Heart left ventricle (tissue), 16 donors: ENCODE measurements at regions of chr1 and their contacts with region 1.

Region 1: GRCh38 chr1:234610348-234611152 is 572 bp upstream of the IRF2BP2 start:
- DNase-seq: peak; percentile 97 to 98 (median 97)
- ATAC-seq: peak; percentile 42 to 85 (median 72)
- H3K4me3 ChIP-seq: peak overlapping the region; percentile 32 to 93 (median 62)
- H3K27ac ChIP-seq: peak overlapping the region; percentile 94 to 100 (median 99)
- H3K4me1 ChIP-seq: peaks cover 9 to 43% (median 32%) of the 10 kb centered on the region in 12 donors
- H3K27me3 ChIP-seq: no peaks in the 10 kb centered on the region
- CTCF ChIP-seq: peak in 1 of 12 donors; percentile 7
- POLR2A ChIP-seq: peak; percentile 61 to 99

Region 2: DNA sequence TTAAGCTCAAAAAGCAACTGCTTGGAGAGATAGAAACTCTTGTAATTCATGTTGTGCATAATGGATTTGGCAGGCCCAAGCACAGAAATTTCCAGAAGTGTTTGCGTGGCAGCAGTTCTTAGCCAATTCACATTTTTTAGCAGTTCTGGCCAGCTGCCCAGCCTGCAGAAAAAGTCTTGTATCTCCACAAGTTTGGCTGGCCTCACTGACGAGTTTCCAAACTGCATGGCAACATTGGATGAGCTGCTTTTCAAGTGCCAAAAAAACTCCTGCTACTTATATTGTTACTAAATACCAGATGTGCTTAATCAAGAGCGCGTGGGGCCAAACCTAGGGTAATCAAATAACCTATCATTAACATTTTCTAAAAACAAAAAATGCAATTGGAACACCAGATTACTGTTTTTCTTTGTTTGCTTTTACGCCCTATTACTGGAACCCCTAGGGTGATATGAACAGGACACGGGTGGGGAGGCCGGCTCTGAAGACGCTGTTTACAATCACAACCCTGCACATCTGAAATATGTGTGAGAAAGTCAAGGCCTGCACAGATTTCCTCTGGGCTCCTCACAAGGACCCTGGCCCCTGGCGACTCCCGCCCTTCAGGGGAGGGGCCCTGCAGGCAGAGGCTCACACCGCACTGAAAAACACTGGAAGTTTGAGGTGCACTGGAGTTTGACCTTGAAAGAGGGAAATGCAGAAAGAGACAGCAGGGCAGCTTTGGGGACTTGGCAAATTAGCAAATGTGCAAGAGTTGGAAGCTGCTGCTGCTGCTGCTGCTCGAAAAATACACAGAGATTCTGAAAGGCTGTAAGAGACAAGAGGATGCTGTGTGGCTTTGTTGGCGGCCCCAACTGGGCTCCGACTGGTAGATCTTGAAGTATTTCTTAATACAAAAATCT is 76.3 kb before region 1 on chr1:
- intact Hi-C with region 1: loop called in 2 of 10 experiments (anchors 1 to 5 kb)
- DNase-seq: peak; percentile 93 to 97 (median 94)
- ATAC-seq: peak; percentile 7 to 19 (median 16)
- H3K4me3 ChIP-seq: peak overlapping the region in 1 of 12 donors; percentile 13
- H3K27ac ChIP-seq: peak overlapping the region; percentile 91 to 99 (median 98)
- H3K4me1 ChIP-seq: peaks cover 35 to 100% (median 98%) of the 10 kb centered on the region in 12 donors
- H3K27me3 ChIP-seq: no peaks in the 10 kb centered on the region
- CTCF ChIP-seq: no peak
- POLR2A ChIP-seq: no peak

Region 3: GRCh38 chr1:234647245-234647644 is 36.7 kb after region 1 on chr1:
- intact Hi-C with region 1: no loop called
- DNase-seq: no peak
- ATAC-seq: no peak
- H3K4me3 ChIP-seq: no peak overlapping the region
- H3K27ac ChIP-seq: no peak overlapping the region
- H3K4me1 ChIP-seq: peaks cover 0 to 16% (median 0%) of the 10 kb centered on the region in 12 donors
- H3K27me3 ChIP-seq: no peaks in the 10 kb centered on the region
- CTCF ChIP-seq: no peak
- POLR2A ChIP-seq: no peak

Region 4: GRCh38 chr1:234709473-234710228 is 99.1 kb after region 1 on chr1:
- intact Hi-C with region 1: no loop called
- DNase-seq: peak in 3 of 5 donors; percentile 74 to 78 (median 78)
- ATAC-seq: peak; percentile 82 to 89 (median 84)
- H3K4me3 ChIP-seq: no peak overlapping the region
- H3K27ac ChIP-seq: peak overlapping the region in 10 of 12 donors; percentile 26 to 83 (median 64)
- H3K4me1 ChIP-seq: peaks cover 0 to 37% (median 2%) of the 10 kb centered on the region in 12 donors
- H3K27me3 ChIP-seq: no peaks in the 10 kb centered on the region
- CTCF ChIP-seq: no peak
- POLR2A ChIP-seq: no peak

Region 5: GRCh38 chr1:234722904-234723720 is 112.6 kb after region 1 on chr1:
- intact Hi-C with region 1: loop called (anchors 1 to 5 kb)
- DNase-seq: peak in 4 of 5 donors; percentile 66 to 79 (median 72)
- ATAC-seq: peak; percentile 6 to 39 (median 16)
- H3K4me3 ChIP-seq: peak overlapping the region in 7 of 12 donors; percentile 5 to 37 (median 26)
- H3K27ac ChIP-seq: peak overlapping the region; percentile 93 to 99 (median 99)
- H3K4me1 ChIP-seq: peaks cover 41 to 98% (median 92%) of the 10 kb centered on the region in 12 donors
- H3K27me3 ChIP-seq: no peaks in the 10 kb centered on the region
- CTCF ChIP-seq: no peak
- POLR2A ChIP-seq: no peak

Region 6: DNA sequence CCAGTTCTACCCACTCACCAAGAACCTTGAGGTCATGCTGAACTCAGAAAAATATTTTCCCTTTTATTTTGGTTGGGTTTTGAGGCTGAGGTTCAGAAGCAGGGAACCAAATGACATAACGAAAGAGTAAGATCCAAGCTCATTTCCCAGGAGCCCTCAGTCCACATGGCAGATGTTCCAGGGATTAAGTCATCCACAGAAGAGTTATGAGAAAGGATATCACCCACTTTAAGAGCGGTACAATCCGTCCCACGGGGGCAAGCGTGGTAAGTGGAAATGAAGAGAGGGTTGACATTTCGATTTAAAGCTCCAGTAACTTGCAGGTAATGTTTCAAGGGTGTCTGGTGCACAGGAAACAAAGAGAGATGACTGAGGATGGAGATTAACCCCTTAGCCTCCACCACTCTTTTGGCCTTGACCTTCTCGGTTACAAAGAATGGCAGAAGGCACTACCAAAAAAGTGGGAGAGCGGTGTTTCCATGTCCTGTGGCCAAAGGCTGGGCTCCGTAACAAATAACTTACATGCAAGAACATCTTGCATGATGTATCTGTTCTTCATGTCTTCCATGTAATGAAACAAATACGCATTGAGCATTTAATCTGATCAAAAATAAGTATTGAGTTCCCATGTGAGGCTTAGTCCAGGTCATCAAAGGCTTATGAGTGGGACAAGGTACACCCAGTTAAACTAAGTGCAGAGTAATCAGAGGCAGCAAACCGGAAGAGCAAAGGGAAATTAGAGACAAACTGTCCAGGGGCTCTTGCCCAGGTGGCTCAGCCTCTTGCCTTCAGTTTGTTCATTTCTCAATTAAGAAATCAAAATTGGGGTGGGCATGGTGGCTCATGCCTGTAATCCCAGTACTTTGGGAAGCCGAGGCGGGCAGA is 276.7 kb after region 1 on chr1:
- intact Hi-C with region 1: loop called in 8 of 10 experiments (anchors 1 to 10 kb)
- DNase-seq: peak in 4 of 5 donors; percentile 65 to 84 (median 74)
- ATAC-seq: peak; percentile 74 to 87 (median 78)
- H3K4me3 ChIP-seq: peak overlapping the region in 2 of 12 donors; percentile 1 to 6
- H3K27ac ChIP-seq: peak overlapping the region; percentile 85 to 97 (median 94)
- H3K4me1 ChIP-seq: peaks cover 0 to 43% (median 26%) of the 10 kb centered on the region in 12 donors
- H3K27me3 ChIP-seq: no peaks in the 10 kb centered on the region
- CTCF ChIP-seq: no peak
- POLR2A ChIP-seq: no peak

Region 7: DNA sequence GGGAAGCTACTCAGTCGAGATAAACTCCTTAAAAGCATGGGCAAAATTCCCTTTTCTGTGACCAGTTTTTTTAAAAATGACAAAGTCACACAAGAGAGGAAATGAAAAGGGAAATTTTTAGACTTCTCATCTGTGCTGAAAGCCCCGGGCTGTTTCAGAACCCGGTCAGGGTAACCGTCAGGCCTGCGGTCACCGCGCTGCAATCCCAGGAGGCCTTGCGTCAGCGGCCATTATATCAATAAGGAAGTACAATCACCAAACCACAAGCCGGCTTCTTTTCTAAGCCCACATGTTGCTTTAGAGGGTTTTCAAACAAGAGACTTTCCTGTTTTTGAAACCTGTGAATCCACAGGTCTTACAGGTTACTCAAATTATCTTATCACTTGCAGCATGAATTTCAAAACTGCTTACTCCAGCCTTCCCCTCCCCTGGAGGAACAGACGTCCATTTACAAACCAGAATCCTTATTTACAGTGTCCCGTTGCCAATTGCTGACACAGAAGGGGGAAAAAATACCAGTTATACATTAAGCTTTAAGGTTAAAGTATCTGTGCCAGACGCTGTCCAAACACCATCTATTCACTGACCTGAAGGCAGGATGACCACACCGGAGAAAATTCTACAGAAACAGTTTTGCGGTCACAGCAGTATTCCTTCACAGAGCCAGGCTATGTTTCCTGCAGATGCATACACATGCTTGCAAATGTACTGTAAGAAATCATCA is 352.8 kb after region 1 on chr1:
- intact Hi-C with region 1: loop called in 2 of 10 experiments (anchors 5 to 10 kb)
- DNase-seq: peak; percentile 81 to 91 (median 86)
- ATAC-seq: peak; percentile 48 to 78 (median 68)
- H3K4me3 ChIP-seq: peak overlapping the region in 3 of 12 donors; percentile 5 to 32 (median 23)
- H3K27ac ChIP-seq: peak overlapping the region; percentile 24 to 99 (median 72)
- H3K4me1 ChIP-seq: peaks cover 9 to 74% (median 45%) of the 10 kb centered on the region in 12 donors
- H3K27me3 ChIP-seq: no peaks in the 10 kb centered on the region
- CTCF ChIP-seq: no peak
- POLR2A ChIP-seq: no peak

Region 8: GRCh38 chr1:235075188-235075926 is 464.8 kb after region 1 on chr1:
- intact Hi-C with region 1: loop called in 8 of 10 experiments (anchors 2 to 5 kb)
- DNase-seq: peak; percentile 78 to 86 (median 86)
- ATAC-seq: peak; percentile 70 to 82 (median 72)
- H3K4me3 ChIP-seq: peak overlapping the region in 10 of 12 donors; percentile 1 to 33 (median 16)
- H3K27ac ChIP-seq: peak overlapping the region; percentile 91 to 99 (median 94)
- H3K4me1 ChIP-seq: peaks cover 9 to 82% (median 67%) of the 10 kb centered on the region in 12 donors
- H3K27me3 ChIP-seq: no peaks in the 10 kb centered on the region
- CTCF ChIP-seq: no peak
- POLR2A ChIP-seq: peak in 1 of 2 donors; percentile 41